Mucosa of descending colon (tissue), 3 donors: ENCODE measurements at regions of chr5 and their contacts with region 1.

Region 1: GRCh38 chr5:56200856-56201666 is 32.1 kb downstream of the ANKRD55 start:
- DNase-seq: peak in 2 of 3 donors; percentile 33 to 75
- ATAC-seq: peak; percentile 92
- H3K4me3 ChIP-seq: no peak overlapping the region
- H3K4me1 ChIP-seq: no peaks in the 10 kb centered on the region
- CTCF ChIP-seq: peak; percentile 53

Region 2: DNA sequence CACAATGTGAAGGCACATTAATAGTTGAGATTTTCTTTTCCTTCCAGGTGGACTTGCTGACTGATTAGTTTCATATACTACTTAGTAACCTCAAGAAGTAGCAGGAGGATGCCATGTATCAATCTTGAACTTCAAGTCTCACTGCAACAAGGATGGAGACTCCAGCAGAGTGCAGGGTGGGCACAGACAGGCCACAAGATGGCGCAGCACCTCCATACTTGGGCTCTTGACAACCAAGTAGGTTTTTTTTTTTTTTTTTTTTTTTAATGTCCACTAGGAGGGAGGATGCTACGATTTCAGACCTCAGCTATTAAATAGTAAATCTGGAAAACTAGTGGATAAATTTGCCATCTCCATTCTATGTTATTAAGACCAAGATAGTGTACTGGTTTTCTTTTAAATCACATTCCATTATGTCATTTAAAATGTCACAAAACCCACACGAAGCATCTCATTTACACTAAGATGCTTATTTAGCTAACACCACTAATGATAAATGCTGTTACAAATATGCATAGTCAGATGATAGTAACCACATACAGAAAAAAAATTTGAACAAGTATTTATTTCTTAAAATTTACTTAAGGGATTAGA is 264.9 kb before region 1 on chr5:
- intact Hi-C with region 1: loop called in 1 of 2 experiments (anchors 2 kb)
- DNase-seq: peak; percentile 76 to 89 (median 83)
- ATAC-seq: peak; percentile 88
- H3K4me3 ChIP-seq: no peak overlapping the region
- H3K4me1 ChIP-seq: no peaks in the 10 kb centered on the region
- CTCF ChIP-seq: peak; percentile 63

Region 3: GRCh38 chr5:55969956-55970355 is 231.1 kb before region 1 on chr5:
- intact Hi-C with region 1: loop called in 1 of 2 experiments (anchors 10 kb)
- DNase-seq: no peak
- ATAC-seq: no peak
- H3K4me3 ChIP-seq: no peak overlapping the region
- H3K4me1 ChIP-seq: peaks cover 4% of the 10 kb centered on the region
- CTCF ChIP-seq: no peak

Region 4: GRCh38 chr5:56148453-56148971 is 52.5 kb before region 1 on chr5:
- intact Hi-C with region 1: no loop called
- DNase-seq: no peak
- ATAC-seq: peak; percentile 74
- H3K4me3 ChIP-seq: no peak overlapping the region
- H3K4me1 ChIP-seq: no peaks in the 10 kb centered on the region
- CTCF ChIP-seq: no peak

Region 5: GRCh38 chr5:57055731-57056130 is 854.7 kb after region 1 on chr5:
- intact Hi-C with region 1: no loop called
- DNase-seq: no peak
- ATAC-seq: peak; percentile 36
- H3K4me3 ChIP-seq: no peak overlapping the region
- H3K4me1 ChIP-seq: peaks cover 13% of the 10 kb centered on the region
- CTCF ChIP-seq: no peak